GM10248 (cell line): ENCODE measurements at regions of chr1 and their contacts with region 1.

Region 1: GRCh38 chr1:211698161-211699026 is 23.0 kb upstream of the NEK2 start:
- DNase-seq: peak; percentile 86
- CTCF ChIP-seq: peak; percentile 99

Region 2: DNA sequence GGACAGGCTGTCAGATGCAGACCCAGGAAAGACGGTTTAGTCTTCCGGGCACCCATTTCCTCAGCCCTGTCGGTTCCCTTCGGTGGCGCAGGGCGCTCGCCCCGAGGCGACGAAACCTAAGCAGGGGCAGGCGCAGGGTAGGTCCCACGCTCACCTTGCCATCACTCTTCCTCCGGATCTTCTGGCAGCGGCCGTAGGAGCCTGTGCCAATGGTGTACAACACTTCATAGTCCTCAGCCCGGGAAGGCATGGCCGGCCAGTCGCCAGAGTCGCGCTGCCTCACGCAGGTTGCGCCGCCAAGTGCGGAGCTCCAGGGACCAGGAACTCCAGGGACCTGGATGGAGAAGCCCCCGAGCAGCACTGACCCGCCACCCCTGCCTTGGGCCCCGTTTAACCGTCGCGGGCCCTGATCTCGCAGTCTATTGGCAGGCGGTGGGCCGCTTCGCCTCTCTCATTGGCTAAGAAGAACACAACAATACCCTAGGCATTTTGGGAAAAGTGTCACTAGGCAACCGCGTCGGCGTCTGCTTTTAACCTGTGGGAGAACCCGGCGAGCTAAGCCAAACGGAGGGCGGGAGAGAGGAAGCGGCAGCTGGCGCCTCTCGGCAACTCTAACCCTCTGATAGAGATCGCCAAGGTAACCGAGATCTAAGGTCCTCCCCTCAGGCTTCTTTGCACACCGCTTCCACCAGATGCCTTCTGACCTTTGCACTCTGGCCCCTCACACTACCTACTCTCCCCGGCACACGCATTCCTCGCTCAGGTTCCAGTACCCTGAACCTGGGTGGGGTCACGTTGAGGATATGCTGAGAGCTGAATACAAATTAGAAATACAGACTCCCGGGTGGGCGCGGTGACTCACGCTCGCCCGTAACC is 22.9 kb before region 1 on chr1 and contains the start of gene NEK2:
- CTCF ChIA-PET with region 1: interaction called, 114 read pairs
- POLR2A ChIA-PET with region 1: no interaction called
- DNase-seq: peak; percentile 93
- CTCF ChIP-seq: no peak

Region 3: DNA sequence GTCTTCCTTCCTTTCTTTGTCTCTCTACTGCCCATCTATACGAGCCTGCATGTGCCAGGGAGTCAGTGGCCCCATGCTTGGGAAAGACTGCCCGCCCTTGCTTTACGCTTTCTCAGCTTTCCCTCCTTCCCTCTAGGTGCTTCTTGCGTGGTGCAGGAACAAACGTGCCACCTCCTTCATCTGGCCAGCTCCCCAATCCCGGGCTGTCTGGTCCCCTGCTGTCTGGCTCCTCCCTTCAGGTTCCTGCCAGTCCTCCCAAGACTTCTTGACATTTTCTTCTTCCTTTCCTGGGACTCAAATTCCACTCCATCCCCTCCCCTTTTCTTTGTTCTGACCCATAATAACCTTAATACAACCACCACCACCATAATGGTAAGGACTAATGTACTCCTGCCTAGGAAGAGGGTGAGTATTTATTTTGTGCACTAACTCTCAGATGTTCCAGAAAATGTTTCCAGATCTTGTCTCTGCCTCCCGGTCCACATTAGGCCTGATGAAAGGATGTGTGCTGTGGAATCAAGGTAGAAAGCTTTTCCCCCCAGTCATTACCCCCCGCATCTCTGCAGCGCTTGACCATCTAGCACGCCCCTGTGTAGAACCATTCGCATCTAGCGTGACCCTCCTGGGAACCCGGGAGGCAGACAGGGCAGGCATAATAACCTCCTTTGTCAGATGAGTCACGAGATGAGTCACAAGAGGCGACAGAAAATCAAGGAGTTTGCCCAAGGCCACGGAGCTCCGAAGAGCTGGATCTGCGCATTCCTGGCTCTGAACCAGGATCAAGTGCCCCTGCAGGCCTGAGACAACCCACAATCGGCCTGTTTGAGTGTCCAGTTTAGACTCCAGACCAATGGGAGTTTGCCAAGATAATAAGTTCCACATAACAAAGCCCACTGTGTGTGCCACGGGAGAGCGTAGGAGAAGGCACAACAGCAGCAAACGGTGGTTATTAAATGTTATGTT is 37.1 kb after region 1 on chr1:
- CTCF ChIA-PET with region 1: interaction called, 23 read pairs
- POLR2A ChIA-PET with region 1: no interaction called
- DNase-seq: no peak
- CTCF ChIP-seq: no peak

Region 4: DNA sequence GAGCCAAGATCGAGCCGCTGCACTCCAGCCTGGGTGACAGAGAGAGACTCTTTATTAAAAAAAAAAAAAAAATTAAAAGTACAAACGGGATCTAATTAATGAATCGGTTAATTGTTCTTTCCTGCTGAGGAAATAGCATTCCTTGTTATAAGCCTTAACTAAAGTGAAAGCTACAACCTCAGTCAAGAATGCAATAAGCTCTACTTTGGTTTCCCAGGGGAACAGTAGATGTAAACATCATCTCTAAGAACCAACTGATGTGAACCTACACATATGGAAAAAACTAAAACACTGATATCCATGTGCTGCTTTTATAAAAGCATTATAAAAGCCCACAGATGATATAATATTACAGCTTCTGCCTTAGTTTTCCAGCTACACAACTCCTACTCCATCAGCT is 90.2 kb after region 1 on chr1:
- CTCF ChIA-PET with region 1: interaction called, 16 read pairs
- POLR2A ChIA-PET with region 1: no interaction called
- DNase-seq: no peak
- CTCF ChIP-seq: no peak

Region 5: DNA sequence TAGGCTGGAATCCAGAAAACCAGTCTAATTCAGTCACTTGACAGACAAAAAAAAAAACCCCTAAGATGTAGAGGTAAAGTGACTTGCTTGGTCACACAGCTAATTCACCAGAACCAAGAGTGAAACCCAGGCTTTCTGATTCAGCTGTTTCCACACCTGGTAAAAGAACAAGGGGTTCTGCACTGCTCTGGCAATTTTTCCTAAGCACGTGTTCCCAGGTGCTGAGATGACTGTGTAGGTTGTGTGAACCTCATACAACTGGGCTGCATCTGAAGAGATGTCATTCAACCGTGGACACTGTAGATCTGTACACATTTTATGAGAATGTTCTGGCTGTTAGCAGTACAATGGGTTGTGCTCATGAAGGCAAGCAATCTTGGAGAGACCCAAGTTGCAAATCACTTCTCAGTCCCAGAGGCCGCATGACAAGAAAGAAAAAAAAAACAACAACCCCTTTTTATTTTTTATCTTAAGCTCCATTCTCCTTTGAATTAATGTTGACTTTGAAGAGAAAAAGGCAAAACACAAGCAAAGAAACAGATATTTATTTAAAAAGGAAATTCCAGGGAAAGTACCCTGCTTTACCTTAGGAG is 241.6 kb after region 1 on chr1:
- CTCF ChIA-PET with region 1: interaction called, 19 read pairs
- POLR2A ChIA-PET with region 1: interaction called, 4 read pairs
- DNase-seq: peak; percentile 73
- CTCF ChIP-seq: no peak

Region 6: DNA sequence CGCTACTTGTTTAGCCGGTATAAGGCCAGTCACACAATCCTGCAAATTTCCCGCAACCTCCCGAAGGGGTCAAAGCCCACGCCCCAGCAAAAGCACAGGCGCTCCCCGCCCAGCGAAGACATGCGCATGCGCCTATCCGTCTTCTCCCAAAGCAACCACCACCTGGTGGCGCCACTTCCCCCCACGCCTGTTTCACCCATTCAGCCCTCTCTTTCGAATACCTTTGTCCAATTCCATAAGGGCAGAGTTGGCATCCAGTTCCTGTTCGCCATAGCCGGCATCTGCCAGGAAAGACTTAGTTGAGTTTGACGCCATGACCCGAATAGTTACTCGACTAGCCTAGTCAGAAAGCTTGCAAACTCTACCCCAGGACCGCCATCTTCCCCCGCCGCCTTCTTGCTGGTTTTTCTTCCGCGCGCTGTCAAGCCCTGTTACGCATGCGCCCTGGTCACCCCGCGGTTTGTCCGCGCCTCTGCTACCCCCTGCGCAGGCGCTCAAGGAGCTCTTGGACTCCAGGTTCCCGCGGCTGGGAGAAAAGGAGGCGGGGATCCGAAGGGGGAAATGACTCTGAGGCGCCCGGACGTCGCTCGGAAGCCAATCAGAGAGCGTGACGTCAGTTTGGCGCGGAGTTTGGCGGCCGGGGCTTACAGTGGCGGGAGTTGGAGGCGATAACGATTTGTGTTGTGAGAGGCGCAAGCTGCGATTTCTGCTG is 336.9 kb after region 1 on chr1 and contains the starts of genes DTL and INTS7:
- CTCF ChIA-PET with region 1: interaction called, 64 read pairs
- POLR2A ChIA-PET with region 1: interaction called, 5 read pairs
- DNase-seq: peak; percentile 98
- CTCF ChIP-seq: peak; percentile 80

Region 7: DNA sequence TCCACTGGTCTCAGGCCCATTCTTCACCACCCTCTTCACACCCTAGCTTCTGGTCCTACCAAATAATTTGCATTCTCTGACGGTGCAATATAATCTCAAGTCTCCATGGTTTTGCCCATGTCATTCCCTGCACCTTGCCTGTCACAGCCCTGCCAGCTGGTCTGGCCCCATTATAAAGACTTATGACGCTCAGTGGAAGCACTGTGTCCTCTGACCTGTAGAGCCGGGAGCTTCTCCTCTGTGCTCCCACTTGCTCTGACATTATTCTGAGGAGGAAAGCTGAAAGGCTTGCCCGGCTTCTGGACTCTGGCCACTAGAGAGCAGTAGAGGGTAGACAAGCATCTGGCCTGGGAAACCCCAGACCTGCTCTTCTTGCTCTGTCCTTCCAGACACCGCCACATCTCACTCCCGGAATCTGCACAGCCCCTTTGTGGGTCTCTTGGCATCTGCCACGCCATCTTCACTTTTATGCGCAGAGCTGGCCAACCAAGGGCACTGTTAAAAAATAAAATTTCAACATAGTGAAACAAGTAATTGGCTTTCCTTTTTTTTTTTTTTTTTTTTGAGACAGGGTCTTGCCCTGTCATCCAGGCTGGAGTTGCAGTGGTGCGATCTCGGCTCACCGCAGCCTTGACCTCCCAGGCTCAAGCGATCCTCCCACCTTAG is 778.8 kb after region 1 on chr1:
- CTCF ChIA-PET with region 1: interaction called, 11 read pairs
- POLR2A ChIA-PET with region 1: no interaction called
- DNase-seq: peak; percentile 87
- CTCF ChIP-seq: peak; percentile 90